ENCODE measurements at regions of chr11 and their contacts with region 1.

Region 1: GRCh38 chr11:111982019-111982464 is 43.2 kb upstream of the DLAT start:
- DNase-seq: peak; percentile 24 to 64 (median 51)
- ATAC-seq: peak; percentile 90
- H3K4me3 ChIP-seq: no peak overlapping the region
- H3K4me3 Mint-ChIP-seq: no peak overlapping the region
- H3K27ac ChIP-seq: no peak overlapping the region
- H3K27ac Mint-ChIP-seq: no peak overlapping the region
- H3K4me1 ChIP-seq: peaks cover 7% of the 10 kb centered on the region
- H3K4me1 Mint-ChIP-seq: peaks cover 7% of the 10 kb centered on the region
- H3K27me3 ChIP-seq: peaks cover 0 to 5% of the 10 kb centered on the region in 2 experiments
- H3K27me3 Mint-ChIP-seq: peaks cover 26% of the 10 kb centered on the region
- CTCF ChIP-seq: peak; percentile 31

Region 2: GRCh38 chr11:111932611-111932950 is 49.5 kb before region 1 on chr11:
- CTCF ChIA-PET with region 1: interaction called, 132 read pairs
- POLR2A ChIA-PET with region 1: no interaction called
- intact Hi-C with region 1: loop called (anchors 1 kb)
- DNase-seq: no peak
- ATAC-seq: no peak
- H3K4me3 ChIP-seq: no peak overlapping the region
- H3K4me3 Mint-ChIP-seq: peak overlapping the region; percentile 7
- H3K27ac ChIP-seq: no peak overlapping the region
- H3K27ac Mint-ChIP-seq: no peak overlapping the region
- H3K4me1 ChIP-seq: peaks cover 17% of the 10 kb centered on the region
- H3K4me1 Mint-ChIP-seq: peaks cover 23% of the 10 kb centered on the region
- H3K27me3 ChIP-seq: no peaks in the 10 kb centered on the region
- H3K27me3 Mint-ChIP-seq: peaks cover 3% of the 10 kb centered on the region
- CTCF ChIP-seq: no peak

Region 3: DNA sequence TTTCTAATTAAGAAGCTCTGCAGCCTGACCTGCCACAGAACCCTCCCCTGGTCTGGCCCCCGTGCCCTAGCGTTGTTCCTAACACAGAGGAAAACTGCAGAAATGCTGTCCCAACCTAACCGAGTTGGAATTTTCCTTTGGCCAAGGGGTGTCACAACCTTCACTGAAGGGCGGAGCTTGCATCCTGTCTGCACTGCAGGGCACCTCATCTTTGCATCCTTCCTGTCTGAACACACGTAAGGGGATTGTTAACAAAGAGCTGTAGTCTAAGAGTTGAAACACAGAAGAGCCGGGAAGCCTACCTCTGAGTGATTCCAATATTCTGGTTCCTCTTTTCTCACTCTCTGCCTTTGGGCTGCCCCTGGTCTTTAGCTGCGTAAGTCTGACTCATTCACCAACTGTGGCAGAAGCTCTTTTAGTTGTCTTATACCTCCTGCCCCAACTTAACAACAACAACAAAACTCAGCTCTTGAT is 43.3 kb before region 1 on chr11:
- CTCF ChIA-PET with region 1: interaction called, 132 read pairs
- POLR2A ChIA-PET with region 1: interaction called, 6 read pairs
- intact Hi-C with region 1: no loop called
- DNase-seq: peak in 5 of 9 experiments; percentile 23 to 56 (median 34)
- ATAC-seq: peak; percentile 57
- H3K4me3 ChIP-seq: no peak overlapping the region
- H3K4me3 Mint-ChIP-seq: peak overlapping the region; percentile 80
- H3K27ac ChIP-seq: peak overlapping the region in 1 of 2 experiments; percentile 45
- H3K27ac Mint-ChIP-seq: peak overlapping the region; percentile 75
- H3K4me1 ChIP-seq: peaks cover 31% of the 10 kb centered on the region
- H3K4me1 Mint-ChIP-seq: peaks cover 36% of the 10 kb centered on the region
- H3K27me3 ChIP-seq: no peaks in the 10 kb centered on the region
- H3K27me3 Mint-ChIP-seq: no peaks in the 10 kb centered on the region
- CTCF ChIP-seq: no peak